ENCODE measurements at regions of chr20 and their contacts with region 1.

Region 1: DNA sequence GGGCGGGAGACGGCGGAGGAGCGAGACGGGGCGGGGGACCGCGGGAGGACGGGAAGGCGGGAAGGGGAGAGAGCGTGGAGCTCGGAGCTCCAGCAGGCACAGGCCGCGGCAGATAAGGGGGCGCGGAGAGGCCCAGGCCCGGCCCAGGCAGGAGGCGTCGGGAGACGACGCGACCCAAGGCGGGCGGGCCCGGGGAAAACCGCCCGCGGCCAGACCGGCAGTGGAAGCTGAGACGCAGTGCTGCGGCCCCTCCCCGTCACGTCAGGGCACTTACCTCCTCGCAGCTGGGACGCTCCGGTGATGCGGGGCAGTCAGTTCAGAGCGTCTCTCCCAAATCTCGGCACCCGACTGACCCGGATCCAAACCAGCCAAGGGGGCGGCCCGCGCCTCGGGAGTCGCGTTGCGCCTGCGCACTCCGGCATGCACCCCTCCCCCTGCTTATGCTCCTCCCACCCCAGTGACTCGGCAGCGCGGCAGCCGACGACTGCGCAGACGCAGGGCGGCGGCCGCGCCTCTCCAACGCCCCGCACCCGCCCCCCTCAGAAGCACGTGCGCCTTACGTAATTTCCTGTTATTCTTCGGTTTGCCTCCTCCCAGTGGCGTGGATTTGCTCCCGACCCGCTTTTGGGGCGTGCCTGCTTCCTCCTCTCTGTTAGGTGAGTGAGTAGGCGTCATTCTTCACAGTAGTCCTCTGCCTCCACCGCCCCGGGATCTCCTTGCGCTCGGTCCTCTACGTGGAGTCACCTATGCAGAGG is at the start of gene OSER1:
- DNase-seq: peak; percentile 97
- H3K4me3 Mint-ChIP-seq: peak within 1 kb of the TSS; percentile 97
- H3K27ac Mint-ChIP-seq: peak within 1 kb of the TSS; percentile 90
- H3K4me1 Mint-ChIP-seq: peaks cover 53% of the 10 kb centered on the region
- H3K27me3 Mint-ChIP-seq: no peaks in the 10 kb centered on the region
- total RNA-seq, gene OSER1: 21.4 and 22.4 TPM in 2 replicates

Region 2: GRCh38 chr20:44460795-44461141 is 250.2 kb after region 1 on chr20:
- intact Hi-C with region 1: loop called (anchors 10 kb)
- DNase-seq: no peak
- H3K4me3 Mint-ChIP-seq: no peak overlapping the region
- H3K27ac Mint-ChIP-seq: no peak overlapping the region
- H3K4me1 Mint-ChIP-seq: no peaks in the 10 kb centered on the region
- H3K27me3 Mint-ChIP-seq: no peaks in the 10 kb centered on the region

Region 3: DNA sequence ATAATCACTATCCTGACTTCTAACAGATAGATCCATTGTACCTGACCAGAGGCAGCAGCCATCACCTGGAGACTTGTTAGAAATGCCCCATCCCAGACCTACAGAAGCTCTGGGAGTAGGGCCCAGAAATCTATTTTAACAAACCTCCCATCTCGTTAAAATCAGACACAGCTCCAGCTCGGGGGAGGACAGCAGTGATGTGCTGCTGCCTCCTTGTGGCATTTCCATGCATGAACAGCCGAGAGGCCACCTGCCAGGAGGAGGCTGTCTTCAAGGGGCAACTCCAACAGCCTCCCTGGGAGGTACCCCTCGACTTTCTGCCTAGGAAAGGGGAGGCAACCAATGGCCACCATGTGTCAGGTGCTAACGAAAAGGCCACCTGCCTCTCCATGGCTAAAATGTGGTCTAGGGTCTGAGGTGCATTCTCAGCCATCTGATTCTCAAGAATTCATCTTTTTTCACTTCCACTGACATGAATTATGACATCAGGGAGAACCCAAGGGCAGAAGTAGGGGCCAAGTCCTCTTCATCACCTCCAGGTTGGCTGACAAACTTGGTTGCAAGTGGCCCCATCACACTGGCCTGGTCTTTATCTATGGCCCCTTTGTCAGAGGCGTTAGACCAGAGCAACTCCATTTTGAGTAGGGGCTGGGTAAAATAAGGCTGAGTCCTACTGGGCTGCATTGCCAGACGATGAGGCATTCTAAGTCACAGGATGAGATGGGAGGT is 522.9 kb after region 1 on chr20:
- intact Hi-C with region 1: loop called (anchors 10 kb)
- DNase-seq: peak; percentile 49
- H3K4me3 Mint-ChIP-seq: no peak overlapping the region
- H3K27ac Mint-ChIP-seq: no peak overlapping the region
- H3K4me1 Mint-ChIP-seq: peaks cover 20% of the 10 kb centered on the region
- H3K27me3 Mint-ChIP-seq: no peaks in the 10 kb centered on the region

Region 4: DNA sequence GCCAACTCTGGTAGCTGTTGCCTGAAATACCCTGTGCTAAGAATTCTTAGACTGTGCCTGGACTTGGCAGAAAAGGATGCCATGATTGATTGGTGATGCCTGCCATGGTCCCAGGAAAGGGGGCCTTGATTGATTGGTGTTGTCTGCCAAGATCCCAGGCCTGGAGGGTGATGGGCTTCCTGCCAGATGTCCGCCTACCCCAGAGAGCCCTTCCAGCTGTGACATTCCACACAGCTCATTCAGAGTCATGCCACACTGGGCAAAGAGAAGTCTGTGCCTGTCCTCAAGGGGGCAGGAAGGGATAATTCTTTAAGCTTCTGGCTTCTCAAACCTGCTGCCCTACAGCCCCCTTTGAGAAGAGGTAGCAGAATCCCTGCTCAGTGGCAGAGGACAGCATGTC is 575.2 kb after region 1 on chr20:
- intact Hi-C with region 1: no loop called
- DNase-seq: no peak
- H3K4me3 Mint-ChIP-seq: no peak overlapping the region
- H3K27ac Mint-ChIP-seq: no peak overlapping the region
- H3K4me1 Mint-ChIP-seq: no peaks in the 10 kb centered on the region
- H3K27me3 Mint-ChIP-seq: no peaks in the 10 kb centered on the region